Natural killer cell (primary cell): ENCODE measurements at regions of chr7 and their contacts with region 1.

Region 1: GRCh38 chr7:3106361-3106826 is 62.7 kb upstream of the CARD11 start:
- DNase-seq: peak in 1 of 2 donors; percentile 42
- ATAC-seq: peak; percentile 39 to 59 (median 57)
- H3K4me3 ChIP-seq: no peak overlapping the region
- H3K4me3 Mint-ChIP-seq: peak overlapping the region; percentile 77
- H3K27ac ChIP-seq: peak overlapping the region; percentile 93
- H3K27ac Mint-ChIP-seq: peak overlapping the region; percentile 94 to 95
- H3K4me1 ChIP-seq: peaks cover 83% of the 10 kb centered on the region
- H3K4me1 Mint-ChIP-seq: peaks cover 79 to 92% of the 10 kb centered on the region in 2 donors
- H3K27me3 ChIP-seq: no peaks in the 10 kb centered on the region
- H3K27me3 Mint-ChIP-seq: no peaks in the 10 kb centered on the region
- CTCF ChIP-seq: no peak

Region 2: DNA sequence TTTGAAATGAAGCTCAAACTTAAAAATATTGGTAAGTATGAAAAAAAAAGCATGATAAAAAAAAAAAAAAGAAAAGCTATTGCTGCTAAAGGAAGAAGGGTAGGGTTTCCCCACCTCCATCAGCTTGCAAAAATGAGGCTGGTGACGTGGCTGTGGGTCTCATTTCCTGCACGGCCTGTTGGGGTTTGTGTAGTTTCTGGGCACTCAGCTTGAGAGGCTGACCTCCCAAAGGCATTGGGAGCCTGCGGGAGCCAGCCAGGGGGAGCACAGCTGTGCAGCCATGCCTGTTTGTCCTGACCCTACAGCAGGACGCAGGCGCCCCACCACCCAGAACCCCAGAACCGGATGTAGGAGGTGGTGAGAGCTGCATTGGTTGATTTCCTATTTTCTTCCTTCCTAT is 13.9 kb before region 1 on chr7:
- intact Hi-C with region 1: loop called (anchors 1 kb)
- DNase-seq: peak; percentile 74 to 92
- ATAC-seq: peak; percentile 83 to 88 (median 86)
- H3K4me3 ChIP-seq: no peak overlapping the region
- H3K4me3 Mint-ChIP-seq: peak overlapping the region; percentile 85
- H3K27ac ChIP-seq: peak overlapping the region; percentile 95
- H3K27ac Mint-ChIP-seq: peak overlapping the region; percentile 95 to 100
- H3K4me1 ChIP-seq: peaks cover 77% of the 10 kb centered on the region
- H3K4me1 Mint-ChIP-seq: peaks cover 61 to 68% of the 10 kb centered on the region in 2 donors
- H3K27me3 ChIP-seq: no peaks in the 10 kb centered on the region
- H3K27me3 Mint-ChIP-seq: no peaks in the 10 kb centered on the region
- CTCF ChIP-seq: no peak

Region 3: GRCh38 chr7:3117488-3118231 is 11.3 kb after region 1 on chr7:
- intact Hi-C with region 1: loop called (anchors 1 kb)
- DNase-seq: no peak
- ATAC-seq: peak in 2 of 3 donors; percentile 34 to 64
- H3K4me3 ChIP-seq: peak overlapping the region; percentile 54
- H3K4me3 Mint-ChIP-seq: peak overlapping the region; percentile 99
- H3K27ac ChIP-seq: peak overlapping the region; percentile 44
- H3K27ac Mint-ChIP-seq: peak overlapping the region; percentile 95
- H3K4me1 ChIP-seq: peaks cover 71% of the 10 kb centered on the region
- H3K4me1 Mint-ChIP-seq: peaks cover 80 to 83% of the 10 kb centered on the region in 2 donors
- H3K27me3 ChIP-seq: no peaks in the 10 kb centered on the region
- H3K27me3 Mint-ChIP-seq: no peaks in the 10 kb centered on the region
- CTCF ChIP-seq: no peak

Region 4: GRCh38 chr7:3146571-3147226 is 40.3 kb after region 1 on chr7:
- intact Hi-C with region 1: loop called (anchors 5 kb)
- DNase-seq: peak in 1 of 2 donors; percentile 37
- ATAC-seq: peak; percentile 67 to 86 (median 86)
- H3K4me3 ChIP-seq: no peak overlapping the region
- H3K4me3 Mint-ChIP-seq: peak overlapping the region; percentile 73
- H3K27ac ChIP-seq: no peak overlapping the region
- H3K27ac Mint-ChIP-seq: peak overlapping the region; percentile 65 to 68
- H3K4me1 ChIP-seq: peaks cover 26% of the 10 kb centered on the region
- H3K4me1 Mint-ChIP-seq: peaks cover 23 to 24% of the 10 kb centered on the region in 2 donors
- H3K27me3 ChIP-seq: no peaks in the 10 kb centered on the region
- H3K27me3 Mint-ChIP-seq: no peaks in the 10 kb centered on the region
- CTCF ChIP-seq: no peak